CD4-positive, alpha-beta memory T cell (primary cell): ENCODE measurements at regions of chr20 and their contacts with region 1.

Region 1: DNA sequence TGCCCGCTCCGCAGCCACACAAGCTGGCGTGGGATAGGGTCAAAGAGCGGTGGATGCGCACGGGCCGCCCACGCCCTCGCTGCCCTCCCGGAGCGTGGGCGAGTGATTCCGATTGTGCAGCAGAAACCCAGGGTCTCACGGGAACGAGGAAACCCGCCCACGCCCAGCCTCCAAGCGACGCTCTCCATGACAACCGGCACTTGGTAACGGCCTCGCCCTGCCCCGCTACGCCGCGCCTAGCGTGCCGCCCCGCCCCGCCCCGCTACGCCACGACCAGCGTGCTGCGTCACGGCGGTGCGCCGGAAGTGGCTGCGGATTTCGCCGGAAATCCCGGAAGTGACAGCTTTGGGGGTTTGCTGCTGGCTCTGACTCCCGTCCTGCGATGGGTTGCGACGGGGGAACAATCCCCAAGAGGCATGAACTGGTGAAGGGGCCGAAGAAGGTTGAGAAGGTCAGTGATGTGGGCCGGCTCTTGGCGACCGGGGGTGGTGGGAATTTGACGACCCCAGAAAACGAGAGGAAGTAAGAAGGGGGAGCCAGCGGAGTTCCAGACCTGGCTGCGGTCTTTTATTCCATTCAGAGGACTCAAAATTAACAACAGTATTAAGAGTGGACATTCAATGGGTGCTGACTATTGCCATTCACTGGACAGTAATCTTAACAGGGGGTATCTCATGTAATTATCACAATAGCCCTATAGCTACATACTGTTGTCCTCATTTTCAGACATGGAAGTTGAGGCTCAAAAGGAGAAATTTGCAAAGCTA is at the start of gene RTF2:
- DNase-seq: peak; percentile 93 to 98 (median 96)
- H3K4me3 ChIP-seq: peak within 1 kb of the TSS; percentile 70 to 99
- H3K4me3 Mint-ChIP-seq: peak within 1 kb of the TSS; percentile 98 to 100 (median 100)
- H3K27ac ChIP-seq: peak within 1 kb of the TSS; percentile 87
- H3K27ac Mint-ChIP-seq: peak within 1 kb of the TSS; percentile 98 to 100 (median 100)
- H3K4me1 ChIP-seq: peaks cover 43% of the 10 kb centered on the region
- H3K4me1 Mint-ChIP-seq: peaks cover 22 to 55% (median 36%) of the 10 kb centered on the region in 4 donors
- H3K27me3 ChIP-seq: no peaks in the 10 kb centered on the region
- H3K27me3 Mint-ChIP-seq: no peaks in the 10 kb centered on the region
- total RNA-seq, gene RTF2: 66.0 to 67.0 TPM

Region 2: GRCh38 chr20:56358596-56359211 is 109.8 kb before region 1 on chr20 and contains the start of gene FAM210B:
- CTCF ChIA-PET with region 1: no interaction called
- POLR2A ChIA-PET with region 1: interaction called, 11 read pairs
- intact Hi-C with region 1: no loop called
- DNase-seq: peak; percentile 80 to 85 (median 82)
- H3K4me3 ChIP-seq: peak within 1 kb of the TSS; percentile 52 to 81
- H3K4me3 Mint-ChIP-seq: peak within 1 kb of the TSS; percentile 90 to 94 (median 92)
- H3K27ac ChIP-seq: peak within 1 kb of the TSS; percentile 49
- H3K27ac Mint-ChIP-seq: peak within 1 kb of the TSS; percentile 29 to 88 (median 86)
- H3K4me1 ChIP-seq: peaks cover 12% of the 10 kb centered on the region
- H3K4me1 Mint-ChIP-seq: peaks cover 10 to 36% (median 25%) of the 10 kb centered on the region in 4 donors
- H3K27me3 ChIP-seq: no peaks in the 10 kb centered on the region
- H3K27me3 Mint-ChIP-seq: no peaks in the 10 kb centered on the region
- total RNA-seq, gene FAM210B: 28.7 to 32.0 TPM

Region 3: GRCh38 chr20:56400090-56400542 is 68.4 kb before region 1 on chr20:
- CTCF ChIA-PET with region 1: interaction called, 5 read pairs
- POLR2A ChIA-PET with region 1: interaction called, 7 read pairs
- intact Hi-C with region 1: loop called (anchors 1 kb)
- DNase-seq: peak; percentile 65 to 70 (median 70)
- H3K4me3 ChIP-seq: no peak overlapping the region
- H3K4me3 Mint-ChIP-seq: no peak overlapping the region
- H3K27ac ChIP-seq: no peak overlapping the region
- H3K27ac Mint-ChIP-seq: peak overlapping the region in 6 of 7 donors; percentile 43 to 84 (median 68)
- H3K4me1 ChIP-seq: peaks cover 15% of the 10 kb centered on the region
- H3K4me1 Mint-ChIP-seq: peaks cover 11 to 30% (median 18%) of the 10 kb centered on the region in 4 donors
- H3K27me3 ChIP-seq: no peaks in the 10 kb centered on the region
- H3K27me3 Mint-ChIP-seq: no peaks in the 10 kb centered on the region

Region 4: DNA sequence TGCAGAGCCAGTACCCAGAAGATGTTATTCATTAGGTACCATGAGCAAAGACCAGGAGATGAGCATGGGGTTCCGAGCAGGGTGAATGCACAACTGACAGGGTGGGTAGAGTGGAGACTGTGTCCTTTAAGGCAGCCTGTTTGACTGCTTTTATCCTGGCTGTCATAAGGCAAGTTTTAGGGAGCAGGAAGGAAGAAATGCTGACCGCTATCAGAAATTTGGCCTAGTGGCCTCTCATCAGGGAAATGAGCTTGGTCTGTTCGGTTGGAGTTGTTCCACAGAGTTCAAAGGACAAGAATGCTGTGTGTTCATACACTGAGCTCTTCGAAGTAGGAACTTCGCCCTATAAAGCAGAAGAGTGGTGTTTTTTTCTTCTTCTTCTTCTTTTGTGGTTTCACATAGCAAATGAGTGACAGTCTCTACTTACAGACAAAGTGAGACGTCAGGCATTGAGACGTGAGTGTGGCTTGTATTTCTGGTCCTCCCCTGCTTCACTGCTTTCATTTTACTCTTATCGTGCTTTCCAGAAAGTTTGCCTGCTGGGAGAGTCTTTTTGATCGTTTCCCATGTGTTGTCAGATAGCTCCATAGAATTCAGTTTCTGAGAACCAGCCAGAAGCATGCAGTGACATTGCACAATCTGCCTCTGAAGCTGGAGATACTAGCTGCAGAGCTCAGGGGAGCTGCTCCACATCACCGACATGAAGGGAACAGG is 56.6 kb before region 1 on chr20 and contains the start of gene CASS4:
- CTCF ChIA-PET with region 1: no interaction called
- POLR2A ChIA-PET with region 1: interaction called, 31 read pairs
- intact Hi-C with region 1: loop called (anchors 1 kb)
- DNase-seq: peak; percentile 63 to 74 (median 68)
- H3K4me3 ChIP-seq: peak within 1 kb of the TSS; percentile 24 to 67
- H3K4me3 Mint-ChIP-seq: peak within 1 kb of the TSS; percentile 90 to 98 (median 94)
- H3K27ac ChIP-seq: peak within 1 kb of the TSS; percentile 80
- H3K27ac Mint-ChIP-seq: peak within 1 kb of the TSS; percentile 94 to 99 (median 98)
- H3K4me1 ChIP-seq: peaks cover 59% of the 10 kb centered on the region
- H3K4me1 Mint-ChIP-seq: peaks cover 33 to 66% (median 48%) of the 10 kb centered on the region in 4 donors
- H3K27me3 ChIP-seq: no peaks in the 10 kb centered on the region
- H3K27me3 Mint-ChIP-seq: no peaks in the 10 kb centered on the region
- total RNA-seq, gene CASS4: 10.8 to 10.9 TPM

Region 5: DNA sequence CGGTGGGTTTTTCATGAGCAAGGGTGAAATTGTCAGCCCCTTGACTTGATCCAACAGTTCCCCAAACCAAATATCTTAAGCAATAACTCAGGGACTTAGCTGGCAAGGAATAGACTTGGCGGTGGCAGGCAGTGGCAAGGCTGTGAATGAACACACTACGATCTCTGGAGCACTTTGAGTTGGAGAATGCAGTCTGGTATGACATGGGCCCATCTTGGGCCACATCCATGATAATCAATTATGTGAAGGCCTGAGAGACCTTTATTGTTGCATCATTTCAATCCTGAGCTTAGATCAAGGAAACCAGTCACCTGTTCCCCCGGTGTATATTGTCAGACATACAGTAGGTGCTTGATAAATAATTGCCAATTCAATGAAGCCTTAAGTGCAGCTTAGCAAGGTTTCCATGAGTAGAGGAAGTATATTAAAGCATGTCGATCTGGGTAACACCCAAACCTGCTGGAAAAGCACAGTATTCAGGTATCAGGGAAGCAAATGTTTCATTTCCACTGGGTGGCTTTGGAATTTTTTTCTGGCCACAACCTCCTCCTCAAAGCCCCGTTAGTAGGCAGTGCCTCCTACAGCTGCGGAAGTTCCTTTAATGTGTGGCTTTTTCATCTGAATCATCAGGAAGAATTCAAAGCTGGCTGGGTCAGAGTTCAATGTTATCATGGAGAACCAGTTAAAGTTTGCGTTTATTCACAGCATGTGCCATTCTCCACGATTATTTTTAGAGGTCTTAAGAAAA is 46.2 kb before region 1 on chr20:
- CTCF ChIA-PET with region 1: no interaction called
- POLR2A ChIA-PET with region 1: interaction called, 10 read pairs
- intact Hi-C with region 1: no loop called
- DNase-seq: no peak
- H3K4me3 ChIP-seq: no peak overlapping the region
- H3K4me3 Mint-ChIP-seq: peak overlapping the region in 7 of 8 donors; percentile 9 to 81 (median 50)
- H3K27ac ChIP-seq: peak overlapping the region; percentile 17
- H3K27ac Mint-ChIP-seq: peak overlapping the region; percentile 84 to 97 (median 91)
- H3K4me1 ChIP-seq: peaks cover 66% of the 10 kb centered on the region
- H3K4me1 Mint-ChIP-seq: peaks cover 41 to 81% (median 58%) of the 10 kb centered on the region in 4 donors
- H3K27me3 ChIP-seq: no peaks in the 10 kb centered on the region
- H3K27me3 Mint-ChIP-seq: no peaks in the 10 kb centered on the region

Region 6: DNA sequence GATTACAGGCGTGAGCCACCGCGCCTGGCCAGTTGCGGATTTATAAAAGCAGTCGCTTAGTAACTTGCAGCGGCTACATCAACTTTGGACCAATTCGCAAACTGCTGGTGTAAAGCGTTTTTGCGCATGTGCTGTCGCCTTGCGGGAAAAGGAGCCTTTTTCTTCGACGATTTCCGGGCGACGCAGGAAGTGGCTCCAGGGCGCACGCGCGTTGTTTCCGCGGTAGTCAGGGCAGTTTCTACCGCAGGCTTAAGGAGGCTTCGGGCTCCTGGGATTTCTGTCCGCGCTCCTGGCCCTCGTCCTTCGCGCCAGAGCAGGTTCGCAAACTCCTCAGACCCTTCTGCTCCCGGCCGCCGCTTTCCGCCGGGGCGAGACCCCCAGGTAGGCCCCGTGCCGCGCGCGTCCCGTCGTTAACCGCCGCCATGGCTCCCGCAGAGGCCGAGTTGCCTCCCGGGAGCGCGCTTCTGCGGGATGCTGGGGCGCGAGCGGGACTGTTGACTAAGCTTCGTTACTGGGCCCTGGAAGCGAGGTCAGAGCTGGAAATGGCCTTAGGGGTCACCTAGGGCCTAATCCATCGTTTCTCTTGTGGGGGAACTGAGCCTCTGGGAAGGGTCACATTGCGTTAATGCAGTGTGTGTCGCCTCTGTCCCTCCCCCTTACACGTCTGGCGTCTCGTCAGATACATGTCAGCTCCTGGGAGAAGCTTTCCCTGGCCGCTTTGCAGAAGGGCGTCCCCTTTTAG is 882.7 kb after region 1 on chr20 and contains the start of gene RAE1:
- CTCF ChIA-PET with region 1: no interaction called
- POLR2A ChIA-PET with region 1: no interaction called
- intact Hi-C with region 1: loop called (anchors 5 kb)
- DNase-seq: peak; percentile 90 to 92 (median 91)
- H3K4me3 ChIP-seq: peak within 1 kb of the TSS; percentile 84 to 92
- H3K4me3 Mint-ChIP-seq: peak within 1 kb of the TSS; percentile 87 to 96 (median 92)
- H3K27ac ChIP-seq: peak within 1 kb of the TSS; percentile 91
- H3K27ac Mint-ChIP-seq: peak within 1 kb of the TSS; percentile 87 to 95 (median 91)
- H3K4me1 ChIP-seq: peaks cover 23% of the 10 kb centered on the region
- H3K4me1 Mint-ChIP-seq: peaks cover 11 to 36% (median 23%) of the 10 kb centered on the region in 4 donors
- H3K27me3 ChIP-seq: no peaks in the 10 kb centered on the region
- H3K27me3 Mint-ChIP-seq: peaks cover 0 to 3% of the 10 kb centered on the region in 2 donors
- total RNA-seq, gene RAE1: 30.9 to 33.8 TPM

Region 7: DNA sequence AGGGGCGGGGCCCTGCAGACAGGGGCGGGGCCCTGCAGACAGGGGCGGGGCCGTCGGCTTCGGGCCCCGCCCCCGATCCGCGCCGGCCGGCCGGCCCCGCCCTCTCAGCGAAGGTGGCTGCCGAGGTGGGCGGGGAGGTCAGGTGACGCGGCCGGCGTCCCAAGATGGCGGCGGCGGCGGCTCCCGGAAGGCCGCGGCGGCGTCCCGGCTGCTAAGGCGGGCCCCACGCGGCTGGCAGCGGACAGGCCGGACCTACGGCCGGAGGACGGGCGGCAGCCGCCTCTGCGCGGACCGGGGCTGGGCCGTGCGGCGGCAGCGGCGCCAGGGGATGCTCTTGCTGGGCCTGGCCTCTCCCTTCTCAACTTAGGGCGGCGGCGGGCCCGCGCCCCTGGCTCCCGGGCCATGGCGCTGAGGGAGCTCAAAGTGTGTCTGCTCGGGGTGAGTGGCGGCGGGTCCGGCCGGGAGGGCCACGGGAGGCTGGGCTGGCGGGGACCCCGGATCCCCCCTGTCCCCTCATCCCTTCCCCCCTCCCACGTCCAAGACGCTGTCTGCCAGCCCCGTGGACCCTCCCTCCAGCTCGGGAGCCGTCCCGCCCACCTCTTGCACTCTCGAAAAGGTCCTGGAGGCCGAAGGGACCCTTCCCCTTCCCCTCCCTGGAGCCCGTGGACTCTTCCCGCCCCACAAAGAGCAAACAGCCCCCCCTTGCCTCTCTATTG is 1841.2 kb after region 1 on chr20 and contains the start of gene RAB22A:
- CTCF ChIA-PET with region 1: no interaction called
- POLR2A ChIA-PET with region 1: no interaction called
- intact Hi-C with region 1: loop called (anchors 10 kb)
- DNase-seq: peak; percentile 77 to 88 (median 83)
- H3K4me3 ChIP-seq: peak within 1 kb of the TSS; percentile 62 to 72
- H3K4me3 Mint-ChIP-seq: peak within 1 kb of the TSS; percentile 88 to 98 (median 94)
- H3K27ac ChIP-seq: peak within 1 kb of the TSS; percentile 87
- H3K27ac Mint-ChIP-seq: peak within 1 kb of the TSS; percentile 95 to 99 (median 99)
- H3K4me1 ChIP-seq: peaks cover 68% of the 10 kb centered on the region
- H3K4me1 Mint-ChIP-seq: peaks cover 40 to 71% (median 56%) of the 10 kb centered on the region in 4 donors
- H3K27me3 ChIP-seq: no peaks in the 10 kb centered on the region
- H3K27me3 Mint-ChIP-seq: no peaks in the 10 kb centered on the region
- total RNA-seq, gene RAB22A: 23.6 TPM